GM10248 (cell line): ENCODE measurements at regions of chr9 and their contacts with region 1.

Region 1: GRCh38 chr9:5857928-5858327 is 25.0 kb upstream of the ERMP1 start:
- DNase-seq: no peak
- CTCF ChIP-seq: no peak

Region 2: DNA sequence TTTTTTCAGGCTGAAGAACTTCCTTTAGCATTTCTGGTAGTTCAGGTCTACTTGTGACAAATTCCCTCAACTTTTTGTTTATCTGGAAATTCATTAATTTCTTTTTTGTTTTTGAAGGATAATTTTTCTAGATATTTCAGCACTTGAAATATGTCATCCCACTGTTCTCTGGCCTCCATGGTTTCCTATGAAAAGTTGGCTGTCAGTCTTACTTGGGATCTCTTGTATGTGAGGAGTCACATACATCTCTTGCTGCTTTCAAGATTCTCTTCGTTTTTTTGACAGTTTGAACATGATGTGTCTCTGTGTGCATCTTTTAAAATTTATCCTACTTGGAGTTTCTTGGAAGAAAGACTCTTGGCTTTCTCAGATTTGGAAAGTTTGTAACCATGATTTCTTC is 149.5 kb before region 1 on chr9:
- CTCF ChIA-PET with region 1: no interaction called
- POLR2A ChIA-PET with region 1: no interaction called
- DNase-seq: no peak
- CTCF ChIP-seq: no peak

Region 3: DNA sequence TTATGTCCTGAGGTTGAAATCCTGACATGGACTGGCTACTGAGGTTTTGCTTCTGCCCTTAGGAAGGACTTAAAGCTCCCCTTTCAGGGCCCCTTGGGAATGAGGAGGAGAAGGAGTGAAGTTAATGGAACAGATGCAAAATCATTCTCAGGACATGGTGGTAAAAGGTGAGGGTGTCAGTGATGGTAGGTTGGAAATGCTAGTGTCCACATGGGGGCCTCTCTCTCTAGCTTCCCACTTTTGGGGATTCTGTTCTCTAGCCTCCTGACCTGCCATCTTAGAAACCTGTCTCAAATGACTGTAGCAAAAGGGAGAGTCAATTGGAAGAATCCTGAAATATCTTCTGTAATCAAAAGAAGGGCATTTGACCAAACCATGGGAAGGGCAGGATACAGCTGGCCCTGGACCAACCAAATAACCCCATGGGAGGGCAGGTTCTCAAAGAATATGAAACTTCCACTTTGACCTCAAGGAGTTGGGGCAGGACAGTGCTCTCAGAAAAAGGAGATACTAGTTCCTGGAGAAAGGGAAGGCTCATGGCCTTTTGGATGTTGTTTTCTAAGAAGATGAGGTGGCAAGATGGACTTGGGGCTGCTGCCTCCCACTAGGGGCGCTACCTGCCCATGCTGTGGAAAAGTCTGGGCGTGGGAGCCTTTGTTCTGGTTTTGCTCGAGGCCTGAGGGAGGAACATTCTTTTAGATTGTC is 11.5 kb after region 1 on chr9:
- CTCF ChIA-PET with region 1: interaction called, 15 read pairs
- POLR2A ChIA-PET with region 1: no interaction called
- DNase-seq: peak; percentile 52
- CTCF ChIP-seq: peak; percentile 30